ENCODE measurements at regions of chr9 and their contacts with region 1.

Region 1: DNA sequence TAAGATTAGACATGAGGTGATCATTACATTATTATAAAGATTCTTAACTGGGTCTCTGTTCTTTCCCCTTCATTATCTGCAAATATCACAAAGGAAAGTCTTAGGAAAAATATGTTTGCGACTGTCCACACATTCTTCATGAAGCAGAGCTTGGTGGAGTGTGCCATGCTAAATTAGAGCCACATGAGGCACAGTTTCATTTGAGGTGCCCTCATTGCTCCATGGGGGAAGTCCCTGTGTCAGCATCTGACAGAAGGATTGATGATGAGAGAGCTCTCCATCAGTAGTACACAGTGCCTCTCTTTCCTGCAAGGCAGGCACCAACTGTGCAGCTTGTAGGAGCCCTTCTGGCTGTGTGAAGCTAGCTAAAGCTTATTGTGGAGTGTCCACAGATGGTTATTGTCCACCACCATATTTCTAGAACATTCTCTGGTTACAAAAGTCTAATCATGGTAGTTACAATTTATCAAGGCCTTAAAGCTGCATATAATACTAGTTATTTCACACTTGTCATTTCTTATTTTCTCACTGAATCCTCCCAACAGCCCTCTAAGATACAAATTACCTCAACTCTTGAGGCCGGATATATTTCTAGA is 63.9 kb downstream of the C9orf152 start:
- DNase-seq: peak; percentile 74
- ATAC-seq: peak; percentile 76
- H3K4me3 ChIP-seq: peak overlapping the region; percentile 7 to 60 (median 30)
- H3K4me3 Mint-ChIP-seq: peak overlapping the region; percentile 79
- H3K27ac ChIP-seq: peak overlapping the region; percentile 90 to 92
- H3K27ac Mint-ChIP-seq: peak overlapping the region; percentile 86
- H3K4me1 ChIP-seq: peaks cover 83 to 85% of the 10 kb centered on the region in 2 donors
- H3K4me1 Mint-ChIP-seq: peaks cover 90% of the 10 kb centered on the region
- H3K27me3 ChIP-seq: no peaks in the 10 kb centered on the region
- H3K27me3 Mint-ChIP-seq: no peaks in the 10 kb centered on the region
- CTCF ChIP-seq: peak; percentile 20

Region 2: GRCh38 chr9:110048403-110048975 is 95.6 kb before region 1 on chr9:
- CTCF ChIA-PET with region 1: interaction called, 6 read pairs
- POLR2A ChIA-PET with region 1: interaction called, 3 read pairs
- intact Hi-C with region 1: loop called (anchors 5 kb)
- DNase-seq: peak; percentile 91
- ATAC-seq: peak; percentile 95
- H3K4me3 ChIP-seq: peak overlapping the region; percentile 79 to 98 (median 88)
- H3K4me3 Mint-ChIP-seq: peak overlapping the region; percentile 98
- H3K27ac ChIP-seq: peak overlapping the region; percentile 40 to 71
- H3K27ac Mint-ChIP-seq: peak overlapping the region; percentile 93
- H3K4me1 ChIP-seq: peaks cover 42 to 47% of the 10 kb centered on the region in 2 donors
- H3K4me1 Mint-ChIP-seq: peaks cover 56% of the 10 kb centered on the region
- H3K27me3 ChIP-seq: no peaks in the 10 kb centered on the region
- H3K27me3 Mint-ChIP-seq: no peaks in the 10 kb centered on the region
- CTCF ChIP-seq: no peak

Region 3: GRCh38 chr9:110058304-110058953 is 85.6 kb before region 1 on chr9:
- CTCF ChIA-PET with region 1: interaction called, 19 read pairs
- POLR2A ChIA-PET with region 1: no interaction called
- intact Hi-C with region 1: no loop called
- DNase-seq: peak; percentile 75
- ATAC-seq: peak; percentile 65
- H3K4me3 ChIP-seq: no peak overlapping the region
- H3K4me3 Mint-ChIP-seq: peak overlapping the region; percentile 68
- H3K27ac ChIP-seq: peak overlapping the region in 1 of 2 donors; percentile 45
- H3K27ac Mint-ChIP-seq: peak overlapping the region; percentile 80
- H3K4me1 ChIP-seq: peaks cover 57 to 70% of the 10 kb centered on the region in 2 donors
- H3K4me1 Mint-ChIP-seq: peaks cover 76% of the 10 kb centered on the region
- H3K27me3 ChIP-seq: no peaks in the 10 kb centered on the region
- H3K27me3 Mint-ChIP-seq: no peaks in the 10 kb centered on the region
- CTCF ChIP-seq: peak; percentile 77

Region 4: DNA sequence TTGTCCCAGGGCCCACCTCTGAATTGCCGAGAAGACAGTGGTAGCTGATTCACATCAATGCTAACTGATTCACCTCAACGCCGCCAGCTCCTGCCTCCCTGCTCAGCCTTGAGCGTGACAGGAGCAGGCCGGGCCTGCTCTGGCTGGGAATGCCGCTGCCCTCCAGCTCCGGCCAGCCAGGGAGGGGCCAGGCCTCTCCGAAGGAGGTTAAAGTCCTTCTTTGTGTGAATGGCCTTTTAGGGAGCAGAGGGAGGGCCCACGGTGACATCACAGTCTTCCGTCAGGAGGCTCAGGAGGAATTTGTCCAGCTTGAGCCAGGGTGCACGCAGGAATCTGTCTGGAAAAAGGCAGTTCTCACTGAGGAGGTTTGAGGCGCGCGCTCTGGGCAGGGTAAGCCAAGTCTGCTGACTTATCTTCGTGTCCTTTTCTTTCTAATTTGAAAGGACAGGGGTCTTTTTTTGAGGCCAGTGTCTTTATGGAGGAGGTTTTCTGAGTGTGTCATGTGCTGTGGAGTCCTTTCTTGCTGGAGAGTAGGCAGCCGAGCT is 18.8 kb before region 1 on chr9:
- CTCF ChIA-PET with region 1: interaction called, 33 read pairs
- POLR2A ChIA-PET with region 1: interaction called, 7 read pairs
- intact Hi-C with region 1: loop called (anchors 2 kb)
- DNase-seq: no peak
- ATAC-seq: no peak
- H3K4me3 ChIP-seq: no peak overlapping the region
- H3K4me3 Mint-ChIP-seq: peak overlapping the region; percentile 71
- H3K27ac ChIP-seq: peak overlapping the region; percentile 90 to 94
- H3K27ac Mint-ChIP-seq: peak overlapping the region; percentile 89
- H3K4me1 ChIP-seq: peaks cover 84 to 92% of the 10 kb centered on the region in 2 donors
- H3K4me1 Mint-ChIP-seq: peaks cover 97% of the 10 kb centered on the region
- H3K27me3 ChIP-seq: no peaks in the 10 kb centered on the region
- H3K27me3 Mint-ChIP-seq: no peaks in the 10 kb centered on the region
- CTCF ChIP-seq: no peak

Region 5: GRCh38 chr9:110131444-110131881 is 12.6 kb before region 1 on chr9:
- CTCF ChIA-PET with region 1: interaction called, 33 read pairs
- POLR2A ChIA-PET with region 1: interaction called, 7 read pairs
- intact Hi-C with region 1: loop called (anchors 1 kb)
- DNase-seq: no peak
- ATAC-seq: no peak
- H3K4me3 ChIP-seq: no peak overlapping the region
- H3K4me3 Mint-ChIP-seq: peak overlapping the region; percentile 72
- H3K27ac ChIP-seq: peak overlapping the region; percentile 90 to 94
- H3K27ac Mint-ChIP-seq: peak overlapping the region; percentile 80
- H3K4me1 ChIP-seq: peaks cover 81 to 90% of the 10 kb centered on the region in 2 donors
- H3K4me1 Mint-ChIP-seq: peaks cover 94% of the 10 kb centered on the region
- H3K27me3 ChIP-seq: no peaks in the 10 kb centered on the region
- H3K27me3 Mint-ChIP-seq: no peaks in the 10 kb centered on the region
- CTCF ChIP-seq: no peak